Common myeloid progenitor, CD34-positive (primary cell): ENCODE measurements at regions of chr3 and their contacts with region 1.

Region 1: GRCh38 chr3:10192953-10193691 is 28.4 kb downstream of the IRAK2 start:
- DNase-seq: peak in 2 of 3 donors; percentile 53 to 54
- H3K4me3 ChIP-seq: peak overlapping the region in 1 of 7 experiments; percentile 1
- H3K27ac ChIP-seq: peak overlapping the region; percentile 62 to 77
- H3K4me1 ChIP-seq: peaks cover 32 to 83% (median 78%) of the 10 kb centered on the region in 4 experiments
- H3K27me3 ChIP-seq: no peaks in the 10 kb centered on the region

Region 2: GRCh38 chr3:10205451-10206165 is 12.5 kb after region 1 on chr3:
- CTCF ChIA-PET with region 1: interaction called, 17 read pairs
- POLR2A ChIA-PET with region 1: interaction called, 5 read pairs
- DNase-seq: no peak
- H3K4me3 ChIP-seq: no peak overlapping the region
- H3K27ac ChIP-seq: no peak overlapping the region
- H3K4me1 ChIP-seq: peaks cover 0 to 7% (median 0%) of the 10 kb centered on the region in 4 experiments
- H3K27me3 ChIP-seq: no peaks in the 10 kb centered on the region

Region 3: DNA sequence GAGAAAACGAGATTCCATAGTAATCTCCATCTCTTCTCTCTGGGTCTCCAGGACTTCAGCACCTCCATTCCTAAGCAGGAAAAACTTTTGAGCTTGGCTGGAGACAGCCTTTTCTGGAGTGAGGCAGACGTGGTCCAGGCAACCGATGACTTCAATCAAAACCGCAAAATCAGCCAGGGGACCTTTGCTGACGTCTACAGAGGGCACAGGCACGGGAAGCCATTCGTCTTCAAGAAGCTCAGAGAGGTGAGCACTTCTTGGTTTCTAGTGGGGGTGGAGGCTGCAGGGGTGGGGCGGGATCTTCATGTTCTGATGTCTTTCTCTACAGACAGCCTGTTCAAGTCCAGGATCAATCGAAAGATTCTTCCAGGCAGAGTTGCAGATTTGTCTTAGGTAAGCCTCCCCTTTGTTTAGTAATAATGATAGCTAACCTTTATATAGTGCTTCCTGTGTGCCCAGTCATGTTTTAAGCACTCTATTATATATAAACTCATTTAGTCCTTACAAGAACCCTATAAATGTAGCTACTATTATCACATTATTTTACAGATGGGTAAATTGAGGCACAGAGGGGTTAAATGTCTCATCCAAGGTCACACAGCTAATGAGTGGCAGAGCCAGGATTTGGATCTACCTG is 20.2 kb after region 1 on chr3:
- CTCF ChIA-PET with region 1: interaction called, 32 read pairs
- POLR2A ChIA-PET with region 1: interaction called, 8 read pairs
- DNase-seq: no peak
- H3K4me3 ChIP-seq: no peak overlapping the region
- H3K27ac ChIP-seq: no peak overlapping the region
- H3K4me1 ChIP-seq: peaks cover 0 to 10% (median 7%) of the 10 kb centered on the region in 4 experiments
- H3K27me3 ChIP-seq: no peaks in the 10 kb centered on the region

Region 4: DNA sequence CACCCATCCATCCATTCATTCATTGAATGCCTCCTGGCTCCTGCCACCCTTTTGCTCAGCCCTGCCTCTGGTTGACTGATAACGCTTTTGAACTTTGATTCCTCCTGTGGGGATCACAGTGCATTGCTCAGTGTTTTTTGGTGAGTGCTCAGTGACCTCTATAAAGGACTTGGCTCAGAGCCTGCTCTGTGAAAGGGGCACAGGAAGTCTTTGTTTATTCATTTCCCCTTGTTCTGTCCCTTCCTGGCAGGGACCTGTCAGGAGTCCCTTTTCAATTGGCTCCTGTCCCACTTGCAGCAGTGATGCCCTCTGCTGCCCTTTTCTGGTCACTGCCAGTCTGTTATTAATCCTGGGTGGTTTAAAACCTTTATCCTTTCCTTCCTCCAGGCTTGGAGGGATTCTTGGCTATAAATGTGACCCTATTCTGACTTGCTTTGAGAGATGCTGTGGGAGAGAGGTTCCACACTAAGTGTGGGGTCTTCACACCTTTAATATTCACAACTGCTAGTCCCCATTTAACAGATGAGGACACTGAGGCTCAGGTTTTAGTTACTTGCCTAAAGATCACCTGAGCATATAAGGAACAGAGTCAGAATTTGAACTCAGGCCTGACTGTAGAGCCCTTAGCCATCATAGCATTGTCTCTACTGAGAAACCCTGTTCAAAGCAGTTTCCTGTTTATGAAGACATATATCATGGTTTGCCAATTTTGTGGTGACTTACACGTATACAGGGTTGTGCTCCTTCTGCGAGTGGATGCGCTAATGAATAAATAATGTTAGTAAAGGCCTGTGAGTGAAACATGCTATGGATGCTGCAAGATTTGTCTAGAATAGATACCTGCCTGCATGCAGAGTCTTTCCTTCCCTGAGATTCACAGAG is 31.9 kb after region 1 on chr3:
- CTCF ChIA-PET with region 1: interaction called, 87 read pairs
- POLR2A ChIA-PET with region 1: interaction called, 16 read pairs
- DNase-seq: peak; percentile 65 to 70 (median 68)
- H3K4me3 ChIP-seq: no peak overlapping the region
- H3K27ac ChIP-seq: no peak overlapping the region
- H3K4me1 ChIP-seq: peaks cover 17 to 40% (median 34%) of the 10 kb centered on the region in 4 experiments
- H3K27me3 ChIP-seq: no peaks in the 10 kb centered on the region